GM12878 (cell line): ENCODE measurements at regions of chr16 and their contacts with region 1.

Region 1: DNA sequence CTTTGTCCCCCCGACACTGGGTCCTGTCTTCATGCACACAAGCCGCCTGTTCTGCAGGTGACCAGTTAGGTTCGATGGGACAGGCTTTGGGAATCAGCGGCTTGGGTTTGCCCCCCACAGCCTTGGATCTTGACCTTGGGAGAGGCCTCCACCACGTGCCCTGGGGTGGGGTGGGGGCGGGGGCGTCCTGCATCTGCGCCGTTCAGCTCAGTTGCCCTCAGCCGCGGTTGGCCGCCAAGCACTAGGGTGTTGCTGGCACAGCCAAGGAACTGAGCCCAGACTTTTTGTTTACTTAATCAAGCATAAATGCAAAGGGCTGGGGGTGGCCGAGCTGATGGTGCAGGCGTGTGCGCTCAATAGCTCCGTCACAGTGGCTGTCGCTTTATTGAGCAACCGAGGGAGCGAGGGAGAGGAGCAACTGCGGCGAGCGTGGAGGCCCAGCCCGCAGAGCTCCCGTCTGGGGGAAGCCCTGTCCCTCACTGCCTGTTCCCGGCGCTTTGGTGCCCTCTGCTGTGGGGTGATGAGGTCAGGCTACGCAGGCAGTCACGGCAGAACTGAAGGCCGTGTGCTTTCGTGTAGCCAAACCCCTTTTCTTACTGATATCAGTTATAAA is 33.9 kb downstream of the JPH3 start:
- DNase-seq: no peak
- ATAC-seq: peak; percentile 85
- H3K4me3 ChIP-seq: no peak overlapping the region
- H3K27ac ChIP-seq: no peak overlapping the region
- H3K4me1 ChIP-seq: no peaks in the 10 kb centered on the region
- H3K27me3 ChIP-seq: no peaks in the 10 kb centered on the region; a peak in 1 of 4 replicates
- CTCF ChIP-seq: peak; percentile 51 to 61 (median 59); a peak in 5 of 6 replicates
- EP300 ChIP-seq: no peak
- POLR2A ChIP-seq: no peak
- RAD21 ChIP-seq: peak; percentile 64

Region 2: DNA sequence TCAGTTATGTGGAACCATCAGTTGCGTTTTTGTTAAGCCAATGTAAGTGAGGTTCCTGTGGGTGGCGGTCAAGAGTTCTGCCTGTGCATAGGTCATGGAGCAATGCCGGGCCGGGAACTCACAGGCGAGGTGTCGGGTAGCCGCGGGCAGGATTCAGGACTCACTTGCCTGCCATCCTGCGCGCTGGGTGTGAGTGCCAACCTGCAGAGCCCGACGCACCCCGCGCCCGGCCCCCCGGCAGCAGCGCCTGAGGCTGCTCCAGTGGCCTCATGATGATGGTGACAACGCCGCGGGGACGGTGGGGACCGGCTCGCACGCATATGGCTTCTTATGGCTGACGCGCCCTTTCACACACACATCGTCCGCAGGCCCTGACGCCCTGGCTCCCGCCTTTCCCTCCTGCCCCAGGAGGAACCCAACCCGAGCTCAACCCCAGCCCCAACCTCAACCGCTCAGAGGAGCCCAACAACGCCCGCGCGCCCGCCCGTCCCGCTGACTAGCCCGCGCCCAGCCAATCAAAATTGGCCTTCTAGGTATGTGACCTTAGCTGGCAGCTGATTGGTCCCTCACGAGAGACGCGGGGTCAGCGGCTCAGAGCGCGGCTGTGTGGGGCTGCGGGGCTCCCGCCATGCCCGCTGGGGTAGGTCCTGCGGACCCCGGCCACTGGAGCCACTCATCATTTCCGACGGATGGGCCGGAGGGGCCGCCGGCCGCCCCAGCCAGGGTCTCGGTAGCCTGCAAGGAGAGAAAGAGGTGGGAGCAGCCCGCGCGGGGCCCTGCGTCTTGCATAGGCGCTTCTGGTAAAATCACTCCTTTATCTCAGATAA is 319.0 kb before region 1 on chr16 and contains the start of gene C16orf95:
- CTCF ChIA-PET with region 1: no interaction called
- POLR2A ChIA-PET with region 1: no interaction called
- RAD21 ChIA-PET with region 1: no interaction called
- SMC1A ChIA-PET with region 1: interaction called, 3 read pairs
- in situ Hi-C with region 1: no loop called
- intact Hi-C with region 1: loop called (anchors 10 kb)
- DNase-seq: peak; percentile 80
- ATAC-seq: peak; percentile 97
- H3K4me3 ChIP-seq: peak within 1 kb of the TSS; percentile 89
- H3K27ac ChIP-seq: peak within 1 kb of the TSS; percentile 95
- H3K4me1 ChIP-seq: peaks cover 12% of the 10 kb centered on the region
- H3K27me3 ChIP-seq: no peaks in the 10 kb centered on the region
- CTCF ChIP-seq: peak; percentile 72 to 74 (median 72)
- EP300 ChIP-seq: no peak
- POLR2A ChIP-seq: peak; percentile 94
- RAD21 ChIP-seq: peak; percentile 55
- polyA plus RNA-seq, gene C16orf95: 0.90 to 4.8 TPM

Region 3: DNA sequence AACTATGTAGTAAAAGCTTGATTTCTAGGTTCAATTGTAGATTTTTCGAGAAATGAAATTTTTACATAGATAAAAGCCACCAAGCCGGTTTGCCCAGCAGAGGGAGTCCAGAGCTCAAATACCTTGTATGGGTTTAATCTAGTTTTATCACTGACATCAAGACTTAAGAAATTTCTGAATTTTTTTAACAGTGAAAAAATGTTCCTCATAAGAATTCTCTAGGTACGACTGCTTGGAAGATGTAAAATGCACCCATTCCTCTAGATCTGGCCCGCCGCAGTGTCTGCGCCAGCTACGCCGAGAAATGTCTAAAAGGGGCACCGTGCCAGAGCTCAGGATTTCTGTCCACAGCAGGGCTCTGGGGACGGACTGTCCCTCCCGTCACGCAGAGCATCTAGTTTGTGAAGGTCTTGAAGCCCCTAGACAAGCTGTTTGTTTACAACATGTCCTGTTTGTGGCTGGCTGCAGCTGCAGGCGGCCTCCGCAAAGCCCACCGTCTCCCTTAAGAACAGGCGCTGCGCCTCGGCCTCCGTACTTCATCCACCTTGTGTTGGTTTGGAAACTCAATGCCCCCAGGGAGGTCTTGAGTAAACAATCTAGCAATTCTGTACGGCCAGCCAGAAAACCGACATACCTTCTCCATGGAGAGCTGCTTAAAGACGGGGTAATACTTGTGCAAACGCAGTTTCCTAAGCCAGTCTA is 219.2 kb before region 1 on chr16:
- CTCF ChIA-PET with region 1: interaction called, 6 read pairs
- POLR2A ChIA-PET with region 1: no interaction called
- RAD21 ChIA-PET with region 1: no interaction called
- SMC1A ChIA-PET with region 1: no interaction called
- in situ Hi-C with region 1: no loop called
- intact Hi-C with region 1: loop called (anchors 5 kb)
- DNase-seq: no peak
- ATAC-seq: no peak
- H3K4me3 ChIP-seq: no peak overlapping the region
- H3K27ac ChIP-seq: no peak overlapping the region
- H3K4me1 ChIP-seq: no peaks in the 10 kb centered on the region
- H3K27me3 ChIP-seq: peaks cover 0 to 2% of the 10 kb centered on the region in 2 experiments; a peak in 1 of 4 replicates
- CTCF ChIP-seq: peak; percentile 12 to 36 (median 30); a peak in 3 of 6 replicates
- EP300 ChIP-seq: no peak
- POLR2A ChIP-seq: no peak
- RAD21 ChIP-seq: peak; percentile 38

Region 4: DNA sequence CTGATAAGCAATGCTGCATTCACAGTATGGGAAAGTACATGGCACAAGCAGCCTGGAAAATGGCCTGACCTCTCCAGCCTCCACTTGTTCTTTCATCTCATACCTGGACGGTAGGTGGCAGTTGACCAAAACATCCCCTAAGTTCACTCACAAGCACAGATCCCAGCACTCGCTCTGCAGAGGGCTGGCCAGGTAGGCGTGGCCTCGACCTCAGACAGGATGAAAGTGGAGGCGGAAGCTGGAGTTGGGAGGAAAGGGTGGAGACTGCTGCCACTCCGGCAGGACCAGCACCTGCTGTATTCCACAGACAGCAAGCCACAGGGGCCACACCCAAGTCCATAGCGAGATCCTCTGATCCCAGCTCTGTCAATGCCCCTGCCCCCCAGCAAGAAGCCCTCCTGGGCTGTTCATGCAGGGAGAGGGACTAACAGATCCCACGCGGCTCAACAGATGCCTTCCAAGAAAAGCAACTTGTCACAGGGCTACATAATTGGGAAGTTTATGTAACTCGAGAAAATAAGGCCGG is 174.6 kb before region 1 on chr16:
- CTCF ChIA-PET with region 1: interaction called, 3 read pairs
- POLR2A ChIA-PET with region 1: no interaction called
- RAD21 ChIA-PET with region 1: no interaction called
- SMC1A ChIA-PET with region 1: no interaction called
- in situ Hi-C with region 1: no loop called
- intact Hi-C with region 1: loop called (anchors 5 kb)
- DNase-seq: no peak
- ATAC-seq: peak; percentile 78
- H3K4me3 ChIP-seq: no peak overlapping the region
- H3K27ac ChIP-seq: no peak overlapping the region
- H3K4me1 ChIP-seq: peaks cover 7% of the 10 kb centered on the region
- H3K27me3 ChIP-seq: no peaks in the 10 kb centered on the region
- CTCF ChIP-seq: peak; percentile 50 to 60 (median 59)
- EP300 ChIP-seq: no peak
- POLR2A ChIP-seq: no peak
- RAD21 ChIP-seq: peak; percentile 35; the same call in 1 of the 2 replicates

Region 5: DNA sequence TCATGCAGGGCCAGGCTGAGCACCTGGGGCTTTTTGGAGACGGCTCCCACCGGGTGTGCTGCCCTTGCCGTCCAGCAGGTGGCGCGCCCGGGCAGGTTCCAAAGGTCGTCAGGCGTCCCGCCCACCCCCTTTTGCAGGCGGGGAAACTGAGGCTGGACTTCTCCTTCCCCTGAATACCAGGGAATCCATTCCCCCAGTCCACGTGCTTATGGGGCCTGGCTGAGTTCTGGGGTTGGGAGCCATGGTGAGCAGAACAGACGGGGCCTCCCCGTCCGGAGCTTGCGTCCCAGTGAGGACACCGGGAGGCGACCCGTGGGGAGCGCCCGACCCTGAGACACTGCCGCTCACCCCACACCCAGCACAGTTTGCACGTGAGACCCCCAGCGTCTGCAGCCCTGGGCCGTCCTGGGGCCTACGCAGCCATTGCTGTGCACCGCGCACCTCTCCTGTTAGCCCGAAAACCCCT is 85.6 kb before region 1 on chr16:
- CTCF ChIA-PET with region 1: interaction called, 4 read pairs
- POLR2A ChIA-PET with region 1: no interaction called
- RAD21 ChIA-PET with region 1: no interaction called
- SMC1A ChIA-PET with region 1: no interaction called
- in situ Hi-C with region 1: no loop called
- intact Hi-C with region 1: loop called (anchors 1 kb)
- DNase-seq: no peak
- ATAC-seq: peak; percentile 71
- H3K4me3 ChIP-seq: no peak overlapping the region
- H3K27ac ChIP-seq: no peak overlapping the region
- H3K4me1 ChIP-seq: no peaks in the 10 kb centered on the region
- H3K27me3 ChIP-seq: no peaks in the 10 kb centered on the region
- CTCF ChIP-seq: peak; percentile 72 to 92 (median 84)
- EP300 ChIP-seq: no peak
- POLR2A ChIP-seq: no peak
- RAD21 ChIP-seq: peak; percentile 59

Region 6: GRCh38 chr16:87582204-87582965 is 53.8 kb before region 1 on chr16:
- CTCF ChIA-PET with region 1: no interaction called
- POLR2A ChIA-PET with region 1: no interaction called
- RAD21 ChIA-PET with region 1: no interaction called
- SMC1A ChIA-PET with region 1: no interaction called
- in situ Hi-C with region 1: no loop called
- intact Hi-C with region 1: no loop called
- DNase-seq: no peak
- ATAC-seq: no peak
- H3K4me3 ChIP-seq: no peak overlapping the region
- H3K27ac ChIP-seq: no peak overlapping the region
- H3K4me1 ChIP-seq: no peaks in the 10 kb centered on the region
- H3K27me3 ChIP-seq: no peaks in the 10 kb centered on the region; a peak in 2 of 4 replicates
- CTCF ChIP-seq: no peak
- EP300 ChIP-seq: no peak
- POLR2A ChIP-seq: no peak
- RAD21 ChIP-seq: no peak

Region 7: DNA sequence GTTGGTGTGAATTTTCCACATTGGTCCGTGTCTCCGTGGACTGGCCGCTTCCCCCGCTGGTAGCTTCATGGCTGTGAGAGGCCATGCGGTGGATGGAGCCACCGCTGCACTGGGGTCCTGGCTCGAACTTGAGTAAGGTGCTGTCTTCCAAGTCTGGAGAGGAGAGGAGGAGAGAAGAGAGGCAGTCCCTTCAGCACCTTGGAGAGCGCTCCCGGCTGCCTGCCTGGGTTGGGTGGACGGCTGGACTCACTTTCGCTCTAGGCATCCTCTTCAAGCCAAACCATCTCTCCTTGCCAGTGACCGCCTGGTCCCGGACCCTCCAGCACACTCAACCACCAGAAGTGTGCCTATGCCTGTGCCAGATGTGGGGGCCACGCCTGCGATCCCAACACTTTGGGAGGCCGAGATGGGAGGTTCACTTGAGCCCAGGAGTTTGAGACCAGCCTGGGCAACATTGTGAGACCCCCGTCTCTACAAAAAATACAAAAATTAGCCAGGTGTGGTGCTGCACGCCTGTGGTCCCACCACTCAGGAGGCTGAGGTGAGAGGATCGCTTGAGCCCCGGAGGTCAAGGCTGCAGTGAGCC is 27.7 kb before region 1 on chr16:
- CTCF ChIA-PET with region 1: no interaction called
- POLR2A ChIA-PET with region 1: no interaction called
- RAD21 ChIA-PET with region 1: no interaction called
- SMC1A ChIA-PET with region 1: no interaction called
- in situ Hi-C with region 1: no loop called
- intact Hi-C with region 1: no loop called
- DNase-seq: no peak
- ATAC-seq: peak; percentile 48; the same call in 1 of the 3 replicates
- H3K4me3 ChIP-seq: no peak overlapping the region
- H3K27ac ChIP-seq: no peak overlapping the region
- H3K4me1 ChIP-seq: no peaks in the 10 kb centered on the region
- H3K27me3 ChIP-seq: peaks cover 0 to 2% of the 10 kb centered on the region in 2 experiments; a peak in 3 of 4 replicates
- CTCF ChIP-seq: no peak
- EP300 ChIP-seq: no peak
- POLR2A ChIP-seq: no peak
- RAD21 ChIP-seq: no peak

Region 8: GRCh38 chr16:87662254-87663204 is 26.4 kb after region 1 on chr16:
- CTCF ChIA-PET with region 1: no interaction called
- POLR2A ChIA-PET with region 1: no interaction called
- RAD21 ChIA-PET with region 1: no interaction called
- SMC1A ChIA-PET with region 1: no interaction called
- in situ Hi-C with region 1: no loop called
- intact Hi-C with region 1: no loop called
- DNase-seq: no peak
- ATAC-seq: no peak
- H3K4me3 ChIP-seq: no peak overlapping the region
- H3K27ac ChIP-seq: no peak overlapping the region
- H3K4me1 ChIP-seq: no peaks in the 10 kb centered on the region
- H3K27me3 ChIP-seq: peaks cover 0 to 2% of the 10 kb centered on the region in 2 experiments; a peak in 2 of 4 replicates
- CTCF ChIP-seq: no peak
- EP300 ChIP-seq: no peak
- POLR2A ChIP-seq: no peak
- RAD21 ChIP-seq: no peak

Region 9: DNA sequence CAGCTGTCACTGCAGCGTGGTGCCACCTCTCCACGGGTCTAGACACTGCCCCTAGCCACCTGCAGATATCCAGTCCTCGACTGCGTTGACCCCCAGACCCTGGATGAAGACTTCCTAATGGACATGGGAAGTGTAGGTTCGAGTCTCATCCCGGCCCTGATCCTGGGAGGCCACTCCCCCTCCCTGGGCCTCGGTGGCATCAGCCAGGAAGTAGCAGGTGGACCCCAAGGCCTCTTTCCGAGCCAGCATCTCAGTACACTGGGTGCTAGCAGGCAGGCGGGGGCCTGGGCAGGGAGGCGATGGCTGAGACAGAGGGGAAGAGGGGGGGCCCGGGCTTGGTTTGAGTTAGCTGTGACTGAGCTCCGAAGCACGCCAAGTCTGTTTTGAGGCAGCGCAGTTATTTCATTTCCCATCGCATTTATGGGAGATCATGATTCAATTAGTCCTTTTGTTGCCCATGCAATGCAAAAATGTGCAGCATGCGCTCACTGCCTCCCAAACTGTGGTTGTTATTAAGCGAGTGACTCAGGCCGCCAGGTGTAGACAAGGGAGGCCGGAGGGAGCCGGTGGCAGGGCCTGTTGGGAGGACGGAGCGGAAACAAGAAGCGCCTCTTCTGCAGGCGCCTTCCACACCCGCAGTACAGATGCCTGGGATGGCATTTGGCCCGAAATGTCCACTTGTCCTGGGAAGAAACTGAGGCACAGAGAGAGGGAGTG is 721.3 kb after region 1 on chr16:
- CTCF ChIA-PET with region 1: no interaction called
- POLR2A ChIA-PET with region 1: no interaction called
- RAD21 ChIA-PET with region 1: no interaction called
- SMC1A ChIA-PET with region 1: no interaction called
- in situ Hi-C with region 1: no loop called
- intact Hi-C with region 1: no loop called
- DNase-seq: no peak
- ATAC-seq: no peak
- H3K4me3 ChIP-seq: no peak overlapping the region
- H3K27ac ChIP-seq: no peak overlapping the region
- H3K4me1 ChIP-seq: no peaks in the 10 kb centered on the region
- H3K27me3 ChIP-seq: no peaks in the 10 kb centered on the region; a peak in 1 of 4 replicates
- CTCF ChIP-seq: no peak
- EP300 ChIP-seq: no peak
- POLR2A ChIP-seq: no peak
- RAD21 ChIP-seq: no peak